A549 (cell line): ENCODE measurements at regions of chr6 and their contacts with region 1.

Region 1: GRCh38 chr6:25365154-25365553 is 86.0 kb downstream of the CARMIL1 start:
- DNase-seq: no peak
- ATAC-seq: no peak
- H3K4me3 ChIP-seq: no peak overlapping the region
- H3K27ac ChIP-seq: no peak overlapping the region
- H3K4me1 ChIP-seq: peaks cover 31% of the 10 kb centered on the region
- CTCF ChIP-seq: no peak
- EP300 ChIP-seq: no peak
- POLR2A ChIP-seq: no peak
- RAD21 ChIP-seq: no peak

Region 2: GRCh38 chr6:24933868-24934401 is 431.2 kb before region 1 on chr6:
- CTCF ChIA-PET with region 1: no interaction called
- POLR2A ChIA-PET with region 1: no interaction called
- DNase-seq: peak; percentile 12 to 35
- ATAC-seq: peak in 1 of 2 experiments; percentile 78; a peak in 3 of 6 replicates
- H3K4me3 ChIP-seq: no peak overlapping the region
- H3K27ac ChIP-seq: no peak overlapping the region
- H3K4me1 ChIP-seq: no peaks in the 10 kb centered on the region
- CTCF ChIP-seq: peak; percentile 27
- EP300 ChIP-seq: no peak
- POLR2A ChIP-seq: no peak
- RAD21 ChIP-seq: no peak; a peak in 1 of 5 replicates

Region 3: GRCh38 chr6:25354078-25354932 is 10.8 kb before region 1 on chr6:
- CTCF ChIA-PET with region 1: interaction called, 10 read pairs
- POLR2A ChIA-PET with region 1: no interaction called
- DNase-seq: no peak
- ATAC-seq: no peak
- H3K4me3 ChIP-seq: no peak overlapping the region
- H3K27ac ChIP-seq: no peak overlapping the region
- H3K4me1 ChIP-seq: peaks cover 4% of the 10 kb centered on the region
- CTCF ChIP-seq: no peak
- EP300 ChIP-seq: no peak
- POLR2A ChIP-seq: no peak
- RAD21 ChIP-seq: no peak

Region 4: DNA sequence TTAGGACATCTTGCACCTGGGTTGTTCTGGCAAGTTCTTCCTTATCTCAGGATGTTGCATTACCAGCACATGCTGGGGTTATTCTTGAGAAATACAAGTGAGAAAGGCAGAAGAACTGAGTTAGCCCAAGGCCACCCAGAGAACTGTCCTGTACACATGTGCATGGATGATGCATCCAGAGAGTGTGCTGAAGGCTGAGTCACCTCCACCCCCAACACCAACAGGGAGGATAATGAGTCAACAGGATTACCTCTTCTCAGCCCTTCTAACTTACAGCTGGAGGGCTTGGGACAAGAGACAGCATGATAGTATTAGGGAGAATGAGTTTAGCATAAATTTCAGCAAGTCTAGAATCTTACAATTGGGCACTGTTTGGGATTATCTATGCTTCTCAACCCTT is 295.4 kb after region 1 on chr6:
- CTCF ChIA-PET with region 1: no interaction called
- POLR2A ChIA-PET with region 1: no interaction called
- DNase-seq: peak; percentile 67 to 76
- ATAC-seq: peak; percentile 99 to 100
- H3K4me3 ChIP-seq: no peak overlapping the region
- H3K27ac ChIP-seq: peak overlapping the region; percentile 78 to 80
- H3K4me1 ChIP-seq: peaks cover 22% of the 10 kb centered on the region
- CTCF ChIP-seq: no peak
- EP300 ChIP-seq: no peak; a peak in 2 of 5 replicates
- POLR2A ChIP-seq: no peak
- RAD21 ChIP-seq: no peak